Activated naive CD4-positive, alpha-beta T cell treated with anti-CD3 and anti-CD28 coated beads for 36 hours (primary cell): ENCODE measurements at regions of chr14 and their contacts with region 1.

Region 1: DNA sequence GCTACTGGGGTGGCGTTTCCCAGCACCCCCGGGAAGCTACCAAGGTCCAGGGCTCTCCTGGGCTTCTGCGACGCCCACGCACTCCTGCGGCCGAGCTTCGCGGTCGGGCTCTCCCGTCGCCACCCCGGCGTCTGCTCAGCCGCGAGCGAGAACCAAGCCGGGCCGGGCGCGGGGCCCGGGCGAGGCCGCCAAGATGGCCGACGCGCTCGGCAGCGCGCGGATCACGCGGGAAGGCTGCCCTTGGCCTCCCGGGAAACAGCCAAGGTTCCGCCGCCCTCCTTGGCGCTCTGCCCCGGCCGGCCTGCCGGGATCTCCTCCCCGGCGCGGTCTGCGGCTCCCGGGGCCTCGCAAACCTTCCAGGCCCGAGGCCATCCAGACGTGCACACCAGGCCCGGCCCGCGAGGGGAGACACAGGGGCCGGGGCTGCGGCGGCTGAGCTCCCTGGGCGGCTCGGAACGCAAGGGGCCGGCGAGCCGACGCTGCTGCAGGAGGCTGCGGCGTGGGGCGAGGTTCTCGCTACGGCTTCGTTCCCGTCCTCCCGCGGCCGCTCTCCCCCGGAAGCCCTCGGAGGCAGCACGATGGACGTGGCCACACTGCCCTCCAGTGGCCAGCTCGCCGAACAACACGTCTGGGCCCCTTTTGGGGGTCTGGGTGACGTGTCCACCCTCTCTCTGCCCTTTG is 23.5 kb upstream of the ZFP36L1 start:
- DNase-seq: peak; percentile 90
- H3K4me3 Mint-ChIP-seq: peak overlapping the region; percentile 76
- H3K27ac Mint-ChIP-seq: peak overlapping the region; percentile 95
- H3K4me1 Mint-ChIP-seq: peaks cover 69% of the 10 kb centered on the region
- H3K27me3 Mint-ChIP-seq: no peaks in the 10 kb centered on the region

Region 2: GRCh38 chr14:67934008-67934481 is 882.4 kb before region 1 on chr14:
- CTCF ChIA-PET with region 1: interaction called, 4 read pairs
- intact Hi-C with region 1: loop called (anchors 1 kb)
- DNase-seq: peak; percentile 12
- H3K4me3 Mint-ChIP-seq: no peak overlapping the region
- H3K27ac Mint-ChIP-seq: no peak overlapping the region
- H3K4me1 Mint-ChIP-seq: peaks cover 4% of the 10 kb centered on the region
- H3K27me3 Mint-ChIP-seq: no peaks in the 10 kb centered on the region

Region 3: GRCh38 chr14:68369281-68370056 is 446.9 kb before region 1 on chr14:
- CTCF ChIA-PET with region 1: interaction called, 3 read pairs
- intact Hi-C with region 1: loop called (anchors 5 kb)
- DNase-seq: peak; percentile 22
- H3K4me3 Mint-ChIP-seq: no peak overlapping the region
- H3K27ac Mint-ChIP-seq: no peak overlapping the region
- H3K4me1 Mint-ChIP-seq: peaks cover 40% of the 10 kb centered on the region
- H3K27me3 Mint-ChIP-seq: no peaks in the 10 kb centered on the region

Region 4: DNA sequence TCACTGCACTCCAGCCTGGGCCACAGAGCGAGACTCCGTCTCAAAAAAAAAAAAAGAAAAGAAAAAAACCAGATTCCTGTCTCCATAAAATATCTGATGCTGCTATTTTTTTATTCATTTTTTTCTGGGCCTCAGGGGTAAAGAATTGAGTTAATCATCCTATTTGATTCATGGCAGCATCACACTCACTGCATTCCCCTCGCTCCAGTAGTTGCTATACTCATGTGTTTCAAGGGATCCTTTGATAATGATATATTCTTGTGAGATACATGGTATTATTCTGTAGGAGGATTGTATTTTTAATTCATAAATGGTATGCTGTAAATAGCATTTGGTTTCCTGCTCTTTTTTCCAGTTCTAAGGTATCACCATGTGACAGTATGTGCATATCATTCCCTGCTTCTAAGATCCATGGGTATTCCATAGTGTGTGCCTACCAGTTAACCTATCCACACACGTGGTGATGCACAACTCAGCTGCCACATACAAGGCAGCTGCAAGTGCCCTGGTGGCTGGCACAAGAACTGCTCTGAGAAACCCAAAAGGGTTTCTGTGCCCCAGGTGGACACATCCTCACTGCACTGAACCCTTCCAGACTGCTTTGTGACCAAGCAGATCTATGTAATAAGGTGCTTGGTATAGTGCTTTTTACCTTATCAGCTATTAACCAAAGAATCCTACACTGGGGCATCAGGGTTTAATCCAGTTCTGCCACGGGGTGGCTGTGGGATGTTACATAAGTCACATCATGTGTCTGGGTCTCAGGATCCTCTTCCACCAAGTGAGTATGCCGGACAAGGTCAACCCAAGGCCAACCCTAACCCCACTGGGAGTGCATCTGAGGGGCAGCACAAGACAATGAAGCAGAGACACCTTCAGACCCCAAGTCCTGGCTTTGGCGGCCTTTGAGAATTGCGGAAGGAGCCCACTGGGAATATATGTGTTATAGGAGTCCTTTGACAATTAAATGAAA is 98.1 kb before region 1 on chr14:
- CTCF ChIA-PET with region 1: interaction called, 3 read pairs
- intact Hi-C with region 1: loop called (anchors 1 kb)
- DNase-seq: peak; percentile 34
- H3K4me3 Mint-ChIP-seq: no peak overlapping the region
- H3K27ac Mint-ChIP-seq: no peak overlapping the region
- H3K4me1 Mint-ChIP-seq: peaks cover 32% of the 10 kb centered on the region
- H3K27me3 Mint-ChIP-seq: no peaks in the 10 kb centered on the region

Region 5: DNA sequence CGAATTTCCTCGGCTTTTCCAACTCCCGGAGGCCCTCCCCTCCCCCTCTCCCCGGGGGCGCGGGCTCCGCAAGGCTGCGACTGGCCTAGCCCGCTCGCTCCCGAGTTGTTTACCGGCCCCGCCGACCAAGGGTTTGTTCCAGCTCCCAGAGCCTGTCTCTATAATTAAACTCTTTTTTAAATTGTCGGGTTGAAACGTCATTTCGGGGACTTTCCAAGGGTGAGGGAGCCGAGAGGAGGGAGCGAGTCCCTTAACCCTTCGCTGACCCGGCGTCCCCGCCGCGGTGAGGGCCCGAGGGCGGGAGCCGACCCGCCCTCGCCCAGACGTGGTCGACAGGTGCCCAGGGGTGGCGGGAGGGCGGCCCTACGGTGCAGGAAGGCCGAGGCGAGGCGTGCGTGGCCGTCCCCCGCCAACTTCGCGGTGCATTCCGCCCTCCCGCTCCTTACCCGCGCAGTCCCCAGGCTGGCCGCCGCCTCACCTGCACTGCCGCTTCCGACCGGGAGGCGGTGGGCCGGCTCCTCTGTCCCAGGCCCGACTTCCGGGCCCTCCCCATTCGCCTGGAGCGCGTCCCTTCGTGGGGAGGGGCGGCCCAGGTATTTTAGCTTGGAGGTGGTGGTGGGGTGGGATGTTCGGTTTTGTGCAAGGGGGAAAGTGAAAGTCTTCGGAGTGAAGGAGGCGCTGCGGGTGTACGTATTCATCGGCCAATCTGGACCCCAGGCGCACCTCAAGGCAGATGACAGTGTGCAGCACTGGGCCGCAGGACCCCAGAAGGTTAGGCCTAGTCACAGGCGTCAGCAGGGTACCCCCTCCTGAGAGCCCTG is 20.6 kb before region 1 on chr14:
- CTCF ChIA-PET with region 1: interaction called, 270 read pairs
- intact Hi-C with region 1: loop called (anchors 1 kb)
- DNase-seq: peak; percentile 85
- H3K4me3 Mint-ChIP-seq: peak overlapping the region; percentile 90
- H3K27ac Mint-ChIP-seq: peak overlapping the region; percentile 100
- H3K4me1 Mint-ChIP-seq: peaks cover 44% of the 10 kb centered on the region
- H3K27me3 Mint-ChIP-seq: no peaks in the 10 kb centered on the region

Region 6: GRCh38 chr14:68862954-68863594 is 46.7 kb after region 1 on chr14:
- CTCF ChIA-PET with region 1: no interaction called
- intact Hi-C with region 1: no loop called
- DNase-seq: peak; percentile 92
- H3K4me3 Mint-ChIP-seq: no peak overlapping the region
- H3K27ac Mint-ChIP-seq: no peak overlapping the region
- H3K4me1 Mint-ChIP-seq: no peaks in the 10 kb centered on the region
- H3K27me3 Mint-ChIP-seq: no peaks in the 10 kb centered on the region

Region 7: DNA sequence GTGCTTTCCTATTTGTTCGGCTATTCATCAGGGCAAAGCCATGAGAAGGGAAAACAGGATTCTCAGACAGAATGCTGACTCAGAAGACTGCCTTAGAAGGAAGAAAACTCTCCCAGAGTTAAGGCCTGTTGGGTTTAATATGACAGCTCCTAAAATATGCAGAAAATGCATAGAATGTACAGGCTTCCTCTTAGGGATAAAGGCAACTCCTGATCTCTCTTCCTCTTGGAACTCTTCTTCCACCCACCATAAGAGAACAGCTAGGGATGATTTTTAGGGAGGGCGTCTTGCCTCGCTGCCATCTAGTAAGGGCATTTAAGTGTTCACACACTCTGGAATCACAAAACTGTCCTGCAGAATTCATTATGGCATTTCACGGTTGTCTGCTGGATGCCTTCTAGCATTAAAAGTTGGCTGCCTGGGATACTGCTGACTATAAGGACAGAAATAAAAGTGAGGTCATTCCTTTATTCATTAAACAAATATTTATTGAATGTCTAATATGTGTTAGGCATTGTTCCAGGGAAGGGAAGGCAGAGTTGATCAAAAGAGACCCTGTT is 262.9 kb after region 1 on chr14:
- CTCF ChIA-PET with region 1: no interaction called
- intact Hi-C with region 1: no loop called
- DNase-seq: no peak
- H3K4me3 Mint-ChIP-seq: no peak overlapping the region
- H3K27ac Mint-ChIP-seq: no peak overlapping the region
- H3K4me1 Mint-ChIP-seq: peaks cover 20% of the 10 kb centered on the region
- H3K27me3 Mint-ChIP-seq: no peaks in the 10 kb centered on the region